Activated B cell treated with CpG ODN at 0.5 μM for 24 hours (primary cell): ENCODE measurements at regions of chr13 and their contacts with region 1.

Region 1: GRCh38 chr13:98632961-98633360 is 56.1 kb upstream of the STK24 start:
- DNase-seq: no peak
- ATAC-seq: no peak
- H3K4me3 Mint-ChIP-seq: no peak overlapping the region
- H3K27ac Mint-ChIP-seq: no peak overlapping the region
- H3K4me1 Mint-ChIP-seq: no peaks in the 10 kb centered on the region
- H3K27me3 Mint-ChIP-seq: peaks cover 2% of the 10 kb centered on the region
- CTCF ChIP-seq: no peak

Region 2: GRCh38 chr13:98592362-98592732 is 40.6 kb before region 1 on chr13:
- CTCF ChIA-PET with region 1: no interaction called
- POLR2A ChIA-PET with region 1: no interaction called
- intact Hi-C with region 1: loop called (anchors 5 kb)
- DNase-seq: no peak
- ATAC-seq: no peak
- H3K4me3 Mint-ChIP-seq: no peak overlapping the region
- H3K27ac Mint-ChIP-seq: no peak overlapping the region
- H3K4me1 Mint-ChIP-seq: peaks cover 9% of the 10 kb centered on the region
- H3K27me3 Mint-ChIP-seq: no peaks in the 10 kb centered on the region
- CTCF ChIP-seq: no peak

Region 3: DNA sequence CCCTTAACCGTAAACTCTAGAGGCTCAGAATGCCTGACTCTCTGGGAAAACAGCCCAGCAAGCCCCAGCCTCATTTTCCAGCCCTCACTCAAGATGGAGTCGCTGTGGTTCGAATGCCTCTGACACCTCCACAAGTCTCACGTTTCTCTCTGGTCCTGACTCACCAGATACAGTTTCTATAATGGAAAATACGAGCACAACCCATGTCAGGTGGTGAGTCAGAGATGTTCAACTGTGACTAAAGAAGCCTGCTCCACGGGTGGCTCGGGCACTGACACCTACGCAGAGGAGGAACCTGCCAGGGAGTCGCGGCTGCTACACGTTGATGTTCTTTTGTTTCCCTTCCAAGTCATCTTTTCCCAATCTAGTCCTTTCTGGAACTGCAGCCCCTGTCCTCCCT is 31.1 kb after region 1 on chr13:
- CTCF ChIA-PET with region 1: no interaction called
- POLR2A ChIA-PET with region 1: no interaction called
- intact Hi-C with region 1: no loop called
- DNase-seq: no peak
- ATAC-seq: peak; percentile 50
- H3K4me3 Mint-ChIP-seq: no peak overlapping the region
- H3K27ac Mint-ChIP-seq: no peak overlapping the region
- H3K4me1 Mint-ChIP-seq: no peaks in the 10 kb centered on the region
- H3K27me3 Mint-ChIP-seq: peaks cover 3% of the 10 kb centered on the region
- CTCF ChIP-seq: no peak